Posterior cingulate gyrus (tissue), 11 donors: ENCODE measurements at regions of chr7 and their contacts with region 1.

Region 1: DNA sequence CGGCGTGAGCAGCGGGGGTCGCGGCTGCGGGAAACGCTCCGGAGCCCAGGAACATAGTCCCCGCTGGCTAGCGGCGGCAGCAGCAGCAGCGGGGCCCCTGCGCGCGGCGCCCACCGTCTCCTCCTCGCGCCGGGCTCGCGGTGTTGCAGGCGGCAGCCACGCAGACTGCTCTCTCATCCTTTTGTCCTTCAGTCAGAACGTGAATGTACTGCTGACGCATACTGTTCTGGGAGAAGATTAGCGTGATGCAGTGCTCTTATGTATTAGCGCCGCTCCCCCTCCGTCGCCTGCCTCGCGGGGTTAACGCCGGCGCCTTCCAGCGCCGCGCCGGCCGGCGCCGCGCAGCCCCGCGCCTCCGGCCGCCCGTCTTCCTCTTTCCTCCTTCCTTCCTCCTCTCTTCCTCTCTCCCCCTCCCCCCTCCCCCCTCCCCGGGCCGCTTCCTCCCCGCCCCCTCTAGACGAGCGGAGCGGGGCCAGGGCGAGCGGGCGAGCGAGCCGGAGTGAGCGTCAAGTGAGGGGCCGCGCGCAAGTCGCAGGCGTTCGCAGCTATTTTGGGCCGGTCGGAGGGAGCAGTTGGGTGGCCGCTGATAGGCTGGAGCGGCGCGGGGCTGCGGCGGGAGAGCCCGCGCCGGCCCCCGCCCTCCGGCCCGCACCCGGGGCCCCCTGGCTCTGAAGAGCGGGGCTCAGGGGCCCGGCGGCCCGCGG is 816 bp upstream of the LRRC4 start:
- DNase-seq: peak in 5 of 10 donors; percentile 47 to 93 (median 63)

Region 2: DNA sequence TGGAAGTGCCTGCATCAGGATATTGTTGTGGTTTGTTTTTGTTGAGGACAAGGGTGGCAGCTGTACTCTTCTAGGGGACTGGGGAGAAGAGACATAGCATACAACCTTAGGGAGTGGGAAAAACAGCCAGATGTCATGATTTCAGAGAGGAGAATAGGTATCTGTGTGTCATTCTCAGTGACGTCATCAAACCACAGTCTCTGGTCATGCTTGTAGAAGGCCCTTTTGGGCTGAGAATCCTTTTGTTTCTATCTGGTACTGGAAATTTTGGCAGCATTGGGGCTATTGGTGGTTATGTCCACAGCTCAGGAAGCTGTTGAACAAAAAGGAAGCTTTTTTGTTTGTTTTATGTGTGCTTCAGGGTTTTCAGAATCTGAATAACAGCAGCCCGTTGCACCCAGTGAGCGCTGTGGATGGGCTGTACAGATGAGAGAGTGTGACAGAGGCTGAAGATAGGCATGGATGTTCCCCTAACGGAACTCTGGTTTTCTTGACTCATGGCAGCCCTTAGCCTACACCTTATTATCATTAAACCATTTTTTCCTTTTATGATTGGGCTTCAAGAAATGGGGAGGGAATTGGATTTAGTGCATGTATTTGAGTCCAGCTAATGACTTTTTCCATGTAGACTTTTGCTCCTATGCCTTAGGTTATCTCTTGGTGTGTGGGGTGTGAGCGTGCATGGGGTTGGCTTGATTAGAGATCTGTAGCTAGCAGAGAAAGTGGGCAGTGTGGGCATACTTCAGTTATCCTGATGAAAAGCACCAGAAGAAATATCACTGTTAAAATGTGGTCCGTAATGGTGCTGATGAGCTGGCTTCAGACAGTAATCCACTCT is 314.3 kb before region 1 on chr7:
- intact Hi-C with region 1: loop called (anchors 2 kb)
- DNase-seq: no peak

Region 3: DNA sequence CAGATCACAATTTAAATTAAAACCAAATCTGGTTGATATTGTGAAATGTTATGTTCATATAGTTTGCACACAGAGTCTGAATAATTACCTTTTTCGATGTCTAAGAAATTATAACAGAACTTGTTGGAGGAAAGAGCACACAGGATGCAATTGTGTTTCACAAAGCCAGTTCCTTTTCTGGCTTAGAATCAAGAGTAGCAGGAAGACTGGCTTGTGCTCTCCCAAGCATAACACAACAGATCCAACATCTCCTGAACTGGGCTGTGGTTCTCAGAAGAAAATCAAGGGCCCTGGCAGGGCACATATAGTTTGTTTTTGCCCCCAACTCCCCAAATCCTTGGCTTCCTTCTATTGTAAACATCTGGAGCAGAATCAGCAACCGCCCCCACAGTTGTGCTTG is 63.5 kb before region 1 on chr7:
- intact Hi-C with region 1: no loop called
- DNase-seq: no peak

Region 4: GRCh38 chr7:128000854-128001265 is 31.2 kb before region 1 on chr7:
- intact Hi-C with region 1: no loop called
- DNase-seq: no peak

Region 5: DNA sequence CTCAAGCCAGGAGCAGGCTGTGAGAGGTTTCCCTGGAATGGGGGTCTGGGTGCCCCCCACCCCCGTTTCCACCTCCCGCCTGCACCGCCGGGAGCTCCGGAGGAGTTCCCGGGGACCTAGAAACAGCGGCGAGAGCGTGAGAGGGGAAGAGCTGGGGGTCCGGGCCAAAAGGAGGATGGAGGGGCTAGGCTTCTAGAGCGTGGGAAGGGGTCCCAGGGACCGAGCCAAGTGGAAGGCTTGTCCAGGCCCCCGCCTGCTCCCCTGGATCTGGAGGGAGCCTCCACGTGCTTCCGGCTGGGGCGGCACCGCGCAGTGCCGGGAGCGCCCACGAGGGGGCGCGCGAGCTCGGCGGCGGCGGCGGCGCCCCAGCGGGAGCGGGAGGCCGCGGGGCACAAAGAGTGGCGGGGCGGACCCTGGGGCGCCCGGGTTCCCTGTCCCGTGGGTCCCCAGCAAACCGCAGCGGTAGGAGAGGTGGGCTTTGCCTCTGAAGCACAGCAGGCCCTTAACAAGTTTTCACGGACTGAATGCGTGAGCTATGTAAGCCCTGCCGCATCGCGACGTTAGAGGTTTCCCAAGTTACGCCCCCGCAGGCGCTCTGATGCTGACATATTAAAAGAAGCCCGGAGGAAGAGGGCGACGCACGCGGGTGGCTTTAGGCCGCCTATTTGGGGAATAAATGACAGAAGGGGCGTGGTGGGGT is 103.6 kb after region 1 on chr7:
- intact Hi-C with region 1: loop called (anchors 2 kb)
- DNase-seq: peak in 8 of 10 donors; percentile 36 to 91 (median 50)